Caco-2 (cell line): ENCODE measurements at regions of chr1 and their contacts with region 1.

Region 1: DNA sequence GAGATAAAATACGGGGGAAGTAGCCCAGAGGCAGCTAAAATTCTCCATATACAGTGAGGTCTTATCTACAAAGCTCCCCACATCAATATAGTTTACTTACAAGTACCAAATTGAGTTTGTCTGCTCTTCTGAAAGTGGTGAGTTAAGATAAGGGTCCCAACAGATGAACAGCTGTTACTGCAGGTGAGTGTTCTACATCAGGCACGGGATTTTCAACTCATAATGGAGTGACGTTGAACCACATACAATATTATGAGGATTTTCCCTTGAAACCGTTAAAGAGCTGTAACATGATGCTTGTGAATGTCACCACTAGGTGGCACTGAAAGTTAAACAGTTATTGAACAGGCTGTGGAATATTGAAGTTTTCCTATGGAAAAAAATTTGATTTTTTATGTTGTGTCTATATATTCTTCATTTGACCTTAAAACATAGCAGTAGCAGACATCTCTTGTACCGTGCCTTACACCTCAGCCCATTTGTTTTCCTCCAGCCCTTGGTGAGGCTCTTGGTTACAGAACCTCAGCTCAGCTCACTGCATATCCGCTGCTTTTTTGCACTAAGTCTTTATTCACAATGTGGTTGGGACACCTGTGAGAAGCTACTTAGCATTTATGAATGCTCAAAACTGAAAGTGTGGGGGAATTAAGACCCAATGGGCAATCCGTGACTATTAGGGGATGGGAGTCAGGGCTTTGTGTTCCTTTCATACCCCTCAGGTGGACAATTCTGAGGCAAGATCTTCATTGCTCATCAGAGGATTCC is 23.2 kb downstream of the CD1D start:
- DNase-seq: peak in 1 of 2 experiments; percentile 43
- H3K4me3 ChIP-seq: no peak overlapping the region
- H3K4me3 Mint-ChIP-seq: no peak overlapping the region
- H3K27ac Mint-ChIP-seq: no peak overlapping the region
- H3K4me1 ChIP-seq: no peaks in the 10 kb centered on the region
- H3K4me1 Mint-ChIP-seq: no peaks in the 10 kb centered on the region
- H3K27me3 ChIP-seq: no peaks in the 10 kb centered on the region
- H3K27me3 Mint-ChIP-seq: peaks cover 5% of the 10 kb centered on the region
- CTCF ChIP-seq: peak; percentile 63 to 79

Region 2: DNA sequence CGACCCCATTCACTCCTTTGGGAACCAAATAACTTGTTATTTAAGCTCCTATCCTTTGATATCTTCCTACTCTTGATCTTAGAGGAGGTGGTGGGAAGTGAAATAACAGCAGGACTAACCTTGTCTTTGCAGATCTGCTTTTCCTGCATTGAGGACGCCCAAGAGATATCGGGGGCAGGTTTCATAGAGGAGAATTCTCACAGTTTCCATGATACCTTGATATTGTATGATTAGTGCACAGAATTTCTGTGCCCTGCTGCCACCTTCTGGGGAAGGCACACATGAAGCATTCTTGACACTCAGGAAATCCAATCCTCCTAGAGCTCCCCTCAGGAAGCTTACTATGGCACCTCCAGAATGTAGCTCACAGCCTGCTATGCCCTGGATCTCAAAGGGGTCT is 125.9 kb after region 1 on chr1:
- CTCF ChIA-PET with region 1: interaction called, 16 read pairs
- POLR2A ChIA-PET with region 1: no interaction called
- intact Hi-C with region 1: loop called (anchors 10 kb)
- DNase-seq: no peak
- H3K4me3 ChIP-seq: no peak overlapping the region
- H3K4me3 Mint-ChIP-seq: no peak overlapping the region
- H3K27ac Mint-ChIP-seq: no peak overlapping the region
- H3K4me1 ChIP-seq: no peaks in the 10 kb centered on the region
- H3K4me1 Mint-ChIP-seq: no peaks in the 10 kb centered on the region
- H3K27me3 ChIP-seq: no peaks in the 10 kb centered on the region
- H3K27me3 Mint-ChIP-seq: peaks cover 2% of the 10 kb centered on the region
- CTCF ChIP-seq: peak in 1 of 2 experiments; percentile 18

Region 3: DNA sequence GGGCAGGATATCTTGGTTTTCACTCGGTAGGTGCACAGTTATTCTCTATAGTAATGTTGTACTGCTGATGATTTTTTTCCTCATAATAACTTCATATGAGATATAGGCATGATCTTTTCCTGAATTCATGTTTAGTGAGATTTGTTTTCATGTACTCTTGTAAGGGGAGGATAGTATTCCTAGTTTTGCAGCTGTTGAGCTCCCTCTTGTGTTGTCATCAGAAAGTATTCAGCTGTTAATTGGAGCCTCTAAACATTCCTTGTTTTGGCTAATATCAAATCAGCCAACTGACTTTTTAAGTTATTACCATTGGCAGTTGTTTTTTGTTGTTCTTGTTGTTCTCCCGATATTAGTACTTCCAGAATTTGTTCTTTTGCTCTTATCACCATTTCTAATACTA is 292.5 kb after region 1 on chr1:
- CTCF ChIA-PET with region 1: interaction called, 10 read pairs
- POLR2A ChIA-PET with region 1: no interaction called
- intact Hi-C with region 1: loop called (anchors 10 kb)
- DNase-seq: no peak
- H3K4me3 ChIP-seq: no peak overlapping the region
- H3K4me3 Mint-ChIP-seq: no peak overlapping the region
- H3K27ac Mint-ChIP-seq: no peak overlapping the region
- H3K4me1 ChIP-seq: no peaks in the 10 kb centered on the region
- H3K4me1 Mint-ChIP-seq: no peaks in the 10 kb centered on the region
- H3K27me3 ChIP-seq: no peaks in the 10 kb centered on the region
- H3K27me3 Mint-ChIP-seq: peaks cover 5% of the 10 kb centered on the region
- CTCF ChIP-seq: peak in 1 of 2 experiments; percentile 12

Region 4: DNA sequence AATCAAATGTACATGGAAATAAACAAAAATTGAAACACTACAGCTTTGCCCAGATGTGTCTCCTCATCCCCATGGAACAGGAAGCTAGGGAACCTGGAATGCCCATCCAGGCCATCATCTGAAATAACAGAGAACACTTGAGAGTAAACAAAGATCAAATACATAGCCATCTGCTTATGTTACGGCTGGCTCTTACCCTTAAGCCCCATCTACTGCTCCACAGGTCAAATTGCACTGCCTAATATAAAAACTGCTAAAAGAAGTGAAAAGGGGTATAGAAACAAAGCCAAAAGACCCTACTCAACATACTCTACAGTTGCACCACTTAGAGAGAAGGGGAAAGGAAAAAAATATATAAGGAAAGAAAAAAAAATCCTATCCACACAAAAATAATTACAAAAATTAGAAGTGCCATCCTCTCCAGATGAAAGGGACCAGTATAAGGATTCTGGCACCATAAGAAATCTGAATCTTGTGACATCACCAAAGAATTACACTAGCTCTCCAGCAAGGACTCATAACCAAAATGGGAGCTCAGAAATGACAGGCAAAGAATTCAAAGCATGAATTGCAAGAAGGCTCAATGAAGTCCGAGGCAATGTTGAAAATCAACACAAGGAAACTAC is 323.4 kb after region 1 on chr1:
- CTCF ChIA-PET with region 1: interaction called, 10 read pairs
- POLR2A ChIA-PET with region 1: no interaction called
- intact Hi-C with region 1: no loop called
- DNase-seq: peak in 1 of 2 experiments; percentile 17
- H3K4me3 ChIP-seq: no peak overlapping the region
- H3K4me3 Mint-ChIP-seq: no peak overlapping the region
- H3K27ac Mint-ChIP-seq: no peak overlapping the region
- H3K4me1 ChIP-seq: no peaks in the 10 kb centered on the region
- H3K4me1 Mint-ChIP-seq: no peaks in the 10 kb centered on the region
- H3K27me3 ChIP-seq: no peaks in the 10 kb centered on the region
- H3K27me3 Mint-ChIP-seq: peaks cover 13% of the 10 kb centered on the region
- CTCF ChIP-seq: peak; percentile 61 to 69

Region 5: GRCh38 chr1:158998781-158999161 is 794.9 kb after region 1 on chr1:
- CTCF ChIA-PET with region 1: interaction called, 6 read pairs
- POLR2A ChIA-PET with region 1: no interaction called
- intact Hi-C with region 1: loop called (anchors 10 kb)
- DNase-seq: peak in 1 of 2 experiments; percentile 48
- H3K4me3 ChIP-seq: no peak overlapping the region
- H3K4me3 Mint-ChIP-seq: no peak overlapping the region
- H3K27ac Mint-ChIP-seq: no peak overlapping the region
- H3K4me1 ChIP-seq: no peaks in the 10 kb centered on the region
- H3K4me1 Mint-ChIP-seq: no peaks in the 10 kb centered on the region
- H3K27me3 ChIP-seq: no peaks in the 10 kb centered on the region
- H3K27me3 Mint-ChIP-seq: peaks cover 4% of the 10 kb centered on the region
- CTCF ChIP-seq: peak; percentile 74 to 79

Region 6: DNA sequence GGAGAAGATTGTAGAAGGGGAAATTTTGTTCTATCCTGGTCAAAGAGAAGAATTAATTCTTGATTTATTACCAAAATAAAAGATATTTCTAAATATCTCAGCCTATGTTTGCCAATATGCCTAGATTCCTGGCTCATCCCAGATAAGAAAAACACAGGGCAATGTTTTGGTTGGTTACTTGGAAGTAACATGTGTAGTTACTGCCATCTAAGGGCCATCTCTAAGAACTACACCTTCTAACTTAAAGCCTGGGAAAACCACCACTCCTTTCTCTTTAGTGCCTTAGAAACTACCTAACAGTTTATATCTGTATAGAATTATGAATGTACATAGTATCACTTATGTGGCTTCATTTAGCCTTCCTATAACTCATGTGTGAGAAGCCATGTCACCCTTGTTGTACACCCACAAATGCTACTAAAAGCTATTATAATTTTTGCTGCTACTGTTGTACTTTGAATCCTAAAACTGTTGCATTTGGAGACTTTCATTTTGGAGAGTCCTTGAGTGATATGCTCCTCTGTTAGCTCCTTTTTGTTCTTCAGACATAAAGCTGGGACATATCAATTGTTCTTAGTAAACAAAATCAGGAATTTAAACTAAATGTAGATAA is 868.2 kb after region 1 on chr1:
- CTCF ChIA-PET with region 1: interaction called, 3 read pairs
- POLR2A ChIA-PET with region 1: no interaction called
- intact Hi-C with region 1: loop called (anchors 1 kb)
- DNase-seq: peak in 1 of 2 experiments; percentile 47
- H3K4me3 ChIP-seq: no peak overlapping the region
- H3K4me3 Mint-ChIP-seq: no peak overlapping the region
- H3K27ac Mint-ChIP-seq: no peak overlapping the region
- H3K4me1 ChIP-seq: no peaks in the 10 kb centered on the region
- H3K4me1 Mint-ChIP-seq: no peaks in the 10 kb centered on the region
- H3K27me3 ChIP-seq: no peaks in the 10 kb centered on the region
- H3K27me3 Mint-ChIP-seq: peaks cover 2% of the 10 kb centered on the region
- CTCF ChIP-seq: peak; percentile 46 to 53